CD8-positive, alpha-beta memory T cell (primary cell): ENCODE measurements at regions of chr2 and their contacts with region 1.

Region 1: DNA sequence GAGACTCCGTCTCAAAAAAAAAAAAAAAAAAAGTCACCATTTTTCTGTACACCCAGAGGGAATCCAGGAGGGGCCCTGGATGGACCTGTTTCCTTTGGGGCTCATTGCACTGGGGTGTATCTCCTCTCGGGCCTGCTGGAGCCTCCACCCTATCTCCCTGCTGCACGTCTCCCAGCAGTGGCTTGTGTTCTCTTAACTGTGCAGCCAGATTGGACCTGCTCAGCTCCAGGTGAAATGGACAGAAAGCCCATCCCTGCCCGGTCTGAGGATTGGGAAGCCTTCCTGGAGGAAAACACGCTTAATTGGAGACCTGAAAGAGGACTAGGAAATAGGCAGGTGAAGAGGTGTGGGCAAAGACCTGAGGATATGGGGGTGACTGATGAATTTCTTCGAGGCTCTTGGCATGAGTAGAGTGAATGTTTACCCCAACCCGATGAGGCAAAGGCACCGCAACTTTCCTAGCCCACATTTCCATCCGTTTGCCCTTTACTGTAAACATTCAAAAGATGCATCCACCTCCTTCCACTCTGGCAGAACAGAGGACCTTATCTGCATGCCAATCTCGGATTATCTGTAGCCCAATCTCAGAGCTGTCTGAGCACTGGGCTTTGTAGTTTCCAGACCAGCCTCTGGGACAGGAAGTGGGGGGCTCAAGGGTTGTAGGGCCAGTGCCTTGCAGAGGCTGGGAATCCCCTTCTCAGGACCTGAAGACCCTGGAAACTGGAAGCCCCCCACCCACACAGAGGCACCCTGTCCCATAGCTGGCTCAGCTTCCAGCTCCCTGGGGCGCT is 2.6 kb upstream of the ZAP70 start:
- DNase-seq: peak in 1 of 5 donors; percentile 31
- H3K4me3 ChIP-seq: no peak overlapping the region
- H3K4me3 Mint-ChIP-seq: peak overlapping the region in 2 of 7 donors; percentile 11 to 23
- H3K27ac ChIP-seq: no peak overlapping the region
- H3K27ac Mint-ChIP-seq: peak overlapping the region in 7 of 8 donors; percentile 50 to 99 (median 79)
- H3K4me1 ChIP-seq: peaks cover 44% of the 10 kb centered on the region
- H3K4me1 Mint-ChIP-seq: peaks cover 48 to 59% (median 52%) of the 10 kb centered on the region in 3 donors
- H3K27me3 ChIP-seq: no peaks in the 10 kb centered on the region
- H3K27me3 Mint-ChIP-seq: peaks cover 5 to 7% of the 10 kb centered on the region in 2 donors

Region 2: GRCh38 chr2:96072746-96073145 is 1638.0 kb before region 1 on chr2:
- CTCF ChIA-PET with region 1: no interaction called
- POLR2A ChIA-PET with region 1: no interaction called
- DNase-seq: no peak
- H3K4me3 ChIP-seq: no peak overlapping the region
- H3K4me3 Mint-ChIP-seq: no peak overlapping the region
- H3K27ac ChIP-seq: no peak overlapping the region
- H3K27ac Mint-ChIP-seq: peak overlapping the region in 1 of 8 donors; percentile 47
- H3K4me1 ChIP-seq: no peaks in the 10 kb centered on the region
- H3K4me1 Mint-ChIP-seq: no peaks in the 10 kb centered on the region
- H3K27me3 ChIP-seq: no peaks in the 10 kb centered on the region
- H3K27me3 Mint-ChIP-seq: peaks cover 3 to 4% of the 10 kb centered on the region in 2 donors

Region 3: DNA sequence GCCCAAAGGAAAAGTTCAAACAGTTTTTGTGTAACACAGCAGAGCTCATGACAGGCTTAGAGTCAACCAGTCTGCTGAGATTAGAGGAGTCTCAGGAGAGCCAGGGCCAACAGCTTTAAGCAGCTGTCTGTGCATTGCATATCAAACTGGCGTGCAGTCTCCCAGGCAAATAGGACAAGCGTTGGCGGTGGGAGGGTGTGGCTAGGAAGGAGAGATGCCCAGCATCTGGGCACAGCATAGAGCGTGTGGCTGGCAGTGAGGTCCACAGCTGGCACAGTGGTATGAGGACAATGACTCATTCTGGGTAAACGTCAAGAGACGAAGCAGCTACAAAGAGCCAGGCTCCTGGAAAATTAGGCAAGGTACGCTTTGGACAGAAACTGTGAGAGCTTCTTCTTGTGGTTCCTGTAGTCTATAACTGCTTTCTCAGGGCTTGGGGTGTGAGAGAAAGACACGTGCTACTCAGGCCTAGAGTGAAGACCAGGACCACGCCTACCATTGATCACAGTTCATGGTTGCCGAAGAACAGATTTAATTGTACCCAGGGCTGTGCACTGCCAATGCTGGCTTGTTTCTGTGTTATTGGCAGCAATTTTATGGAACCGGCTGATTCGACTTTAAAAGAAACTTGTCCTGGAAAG is 17.4 kb after region 1 on chr2:
- CTCF ChIA-PET with region 1: interaction called, 20 read pairs
- POLR2A ChIA-PET with region 1: interaction called, 3 read pairs
- DNase-seq: no peak
- H3K4me3 ChIP-seq: no peak overlapping the region
- H3K4me3 Mint-ChIP-seq: peak overlapping the region; percentile 5 to 61 (median 49)
- H3K27ac ChIP-seq: no peak overlapping the region
- H3K27ac Mint-ChIP-seq: peak overlapping the region; percentile 76 to 96 (median 88)
- H3K4me1 ChIP-seq: peaks cover 51% of the 10 kb centered on the region
- H3K4me1 Mint-ChIP-seq: peaks cover 71 to 93% (median 76%) of the 10 kb centered on the region in 3 donors
- H3K27me3 ChIP-seq: no peaks in the 10 kb centered on the region
- H3K27me3 Mint-ChIP-seq: no peaks in the 10 kb centered on the region

Region 4: DNA sequence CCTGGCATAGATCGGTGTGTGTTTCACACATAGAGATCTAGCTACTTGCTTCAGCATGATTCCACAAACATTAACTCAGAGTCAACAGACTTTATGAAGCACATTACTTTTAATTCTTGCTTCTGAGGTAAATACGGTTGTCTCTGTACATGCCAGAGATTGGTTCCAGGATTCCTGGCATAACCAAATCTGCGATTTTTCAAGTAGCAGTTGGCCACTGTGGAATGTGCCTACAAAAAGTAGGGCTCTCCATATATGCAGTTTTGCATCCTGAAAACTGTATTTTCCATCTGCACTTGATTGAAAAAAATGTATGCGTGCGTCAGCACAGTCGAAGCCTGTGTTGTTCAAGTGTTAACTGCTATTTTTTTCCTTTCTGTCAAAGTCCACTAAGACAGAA is 87.6 kb after region 1 on chr2:
- CTCF ChIA-PET with region 1: no interaction called
- POLR2A ChIA-PET with region 1: no interaction called
- DNase-seq: no peak
- H3K4me3 ChIP-seq: no peak overlapping the region
- H3K4me3 Mint-ChIP-seq: no peak overlapping the region
- H3K27ac ChIP-seq: no peak overlapping the region
- H3K27ac Mint-ChIP-seq: no peak overlapping the region
- H3K4me1 ChIP-seq: no peaks in the 10 kb centered on the region
- H3K4me1 Mint-ChIP-seq: no peaks in the 10 kb centered on the region
- H3K27me3 ChIP-seq: no peaks in the 10 kb centered on the region
- H3K27me3 Mint-ChIP-seq: no peaks in the 10 kb centered on the region